A673 (cell line): ENCODE measurements at regions of chr2 and their contacts with region 1.

Region 1: DNA sequence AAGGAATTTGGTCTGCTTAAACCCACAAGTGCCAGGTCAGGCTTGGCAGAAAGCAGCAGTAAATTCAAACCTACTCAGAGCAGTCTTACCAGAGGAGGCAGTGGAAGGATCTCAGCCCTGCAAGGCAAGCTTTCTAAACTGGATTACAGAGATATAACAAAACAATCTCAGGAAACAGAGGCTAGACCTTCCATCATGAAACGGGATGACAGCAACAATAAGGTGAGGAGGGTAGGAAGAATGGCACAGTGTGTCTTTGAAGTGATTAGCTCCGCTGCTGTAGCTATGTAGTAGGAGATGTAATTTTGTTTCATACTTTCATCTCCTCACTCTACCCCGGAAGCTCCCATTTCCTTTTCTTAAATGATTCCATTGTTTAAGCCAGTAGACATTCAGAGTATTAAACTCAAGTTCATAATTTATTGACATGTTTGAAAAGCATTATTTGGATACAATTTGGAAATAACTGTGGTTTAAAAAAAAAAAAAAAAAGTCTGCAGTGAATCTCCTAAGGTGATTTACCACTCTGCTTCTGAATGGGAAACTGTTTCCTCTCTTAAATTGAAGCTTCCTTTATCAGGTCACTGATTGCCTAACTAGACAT is 29.4 kb upstream of the DYSF start:
- DNase-seq: peak; percentile 92
- H3K4me3 ChIP-seq: no peak overlapping the region
- H3K27ac ChIP-seq: no peak overlapping the region
- H3K4me1 ChIP-seq: peaks cover 24% of the 10 kb centered on the region
- H3K27me3 ChIP-seq: no peaks in the 10 kb centered on the region
- CTCF ChIP-seq: no peak

Region 2: GRCh38 chr2:71410696-71411095 is 13.2 kb before region 1 on chr2:
- CTCF ChIA-PET with region 1: no interaction called
- POLR2A ChIA-PET with region 1: interaction called, 15 read pairs
- intact Hi-C with region 1: no loop called
- DNase-seq: no peak
- H3K4me3 ChIP-seq: no peak overlapping the region
- H3K27ac ChIP-seq: no peak overlapping the region
- H3K4me1 ChIP-seq: no peaks in the 10 kb centered on the region
- H3K27me3 ChIP-seq: no peaks in the 10 kb centered on the region
- CTCF ChIP-seq: no peak